ENCODE measurements at regions of chr12 and their contacts with region 1.

Region 1: DNA sequence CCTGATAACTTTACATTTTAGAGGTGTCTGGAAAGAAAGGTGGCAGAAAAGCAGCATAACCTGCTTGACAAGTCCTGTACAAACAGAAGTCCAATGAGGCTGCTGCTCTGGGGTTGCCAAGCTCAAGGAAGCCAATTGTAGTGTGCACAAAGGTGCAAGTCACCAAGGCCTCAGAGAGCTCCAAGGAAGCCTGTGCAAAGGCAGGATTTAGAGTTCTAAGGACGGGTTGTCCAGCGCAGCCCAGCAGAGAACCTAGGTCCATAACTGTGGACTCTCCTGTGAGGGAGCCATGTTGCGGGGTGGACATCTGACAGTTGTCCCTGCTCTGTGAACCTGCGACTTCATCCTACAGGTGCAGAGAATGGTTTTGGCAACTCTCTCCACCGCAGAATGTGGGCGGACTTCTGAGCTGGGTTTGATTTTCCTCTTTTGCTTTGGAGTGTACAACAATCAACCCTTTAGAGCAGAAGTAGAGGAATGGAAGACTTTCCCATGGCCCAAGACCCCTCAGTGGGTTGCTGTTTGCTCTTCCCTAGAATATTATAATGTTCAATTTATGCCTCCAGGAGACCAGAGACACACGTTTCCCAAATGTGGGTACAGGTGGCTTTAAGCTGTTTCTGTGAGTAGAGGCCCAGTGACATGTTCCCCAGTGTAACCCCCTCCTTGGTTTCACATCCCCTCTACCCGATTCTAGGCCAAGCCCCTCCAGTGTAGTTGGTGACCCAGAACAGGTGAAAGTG is 81.0 kb downstream of the ETV6 start:
- DNase-seq: no peak
- ATAC-seq: no peak
- H3K4me3 Mint-ChIP-seq: no peak overlapping the region
- H3K27ac Mint-ChIP-seq: peak overlapping the region; percentile 40
- H3K4me1 Mint-ChIP-seq: peaks cover 58% of the 10 kb centered on the region
- H3K27me3 Mint-ChIP-seq: no peaks in the 10 kb centered on the region

Region 2: GRCh38 chr12:11581179-11581755 is 149.2 kb before region 1 on chr12:
- CTCF ChIA-PET with region 1: interaction called, 11 read pairs
- POLR2A ChIA-PET with region 1: no interaction called
- DNase-seq: peak; percentile 81
- ATAC-seq: no peak
- H3K4me3 Mint-ChIP-seq: no peak overlapping the region
- H3K27ac Mint-ChIP-seq: no peak overlapping the region
- H3K4me1 Mint-ChIP-seq: peaks cover 2% of the 10 kb centered on the region
- H3K27me3 Mint-ChIP-seq: peaks cover 27% of the 10 kb centered on the region

Region 3: GRCh38 chr12:11648831-11649702 is 81.4 kb before region 1 on chr12 and contains the start of gene ETV6:
- CTCF ChIA-PET with region 1: no interaction called
- POLR2A ChIA-PET with region 1: interaction called, 15 read pairs
- DNase-seq: peak; percentile 77
- ATAC-seq: peak; percentile 63
- H3K4me3 Mint-ChIP-seq: peak within 1 kb of the TSS; percentile 90
- H3K27ac Mint-ChIP-seq: peak within 1 kb of the TSS; percentile 97
- H3K4me1 Mint-ChIP-seq: peaks cover 33% of the 10 kb centered on the region
- H3K27me3 Mint-ChIP-seq: peaks cover 8% of the 10 kb centered on the region
- total RNA-seq, gene ETV6: 22.1 to 26.1 TPM

Region 4: DNA sequence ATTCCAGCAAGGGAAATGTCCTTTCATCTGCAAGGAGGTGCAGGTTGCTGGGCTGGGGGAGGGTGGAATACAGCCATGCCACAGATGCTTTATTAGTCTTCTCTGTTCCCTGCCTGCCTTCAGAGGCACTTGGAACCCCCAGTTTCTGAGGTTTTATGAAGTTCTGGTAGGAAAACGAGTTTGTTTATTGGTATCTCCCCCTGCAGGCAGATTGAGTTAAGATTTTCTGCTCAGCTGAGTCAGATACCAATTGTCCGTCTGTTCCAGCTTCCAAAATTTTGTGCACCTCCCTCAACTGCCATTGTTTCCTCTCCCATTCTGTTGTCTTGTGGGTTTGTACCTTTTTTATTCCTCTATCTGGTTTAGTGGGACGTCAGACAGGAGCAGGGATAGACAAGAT is 74.6 kb after region 1 on chr12:
- CTCF ChIA-PET with region 1: no interaction called
- POLR2A ChIA-PET with region 1: no interaction called
- DNase-seq: no peak
- ATAC-seq: no peak
- H3K4me3 Mint-ChIP-seq: no peak overlapping the region
- H3K27ac Mint-ChIP-seq: no peak overlapping the region
- H3K4me1 Mint-ChIP-seq: peaks cover 20% of the 10 kb centered on the region
- H3K27me3 Mint-ChIP-seq: no peaks in the 10 kb centered on the region